SK-N-SH (cell line): ENCODE measurements at regions of chr5 and their contacts with region 1.

Region 1: GRCh38 chr5:86880785-86881492 is 263.2 kb downstream of the COX7C start:
- DNase-seq: peak; percentile 30
- H3K4me3 ChIP-seq: peak overlapping the region in 1 of 2 experiments; percentile 47; a peak in 1 of 4 replicates
- H3K27ac ChIP-seq: no peak overlapping the region
- H3K4me1 ChIP-seq: no peaks in the 10 kb centered on the region
- H3K27me3 ChIP-seq: peaks cover 14% of the 10 kb centered on the region
- CTCF ChIP-seq: peak; percentile 77
- EP300 ChIP-seq: no peak
- RAD21 ChIP-seq: peak; percentile 77

Region 2: GRCh38 chr5:86909456-86910295 is 28.7 kb after region 1 on chr5:
- CTCF ChIA-PET with region 1: no interaction called
- POLR2A ChIA-PET with region 1: no interaction called
- DNase-seq: no peak
- H3K4me3 ChIP-seq: no peak overlapping the region
- H3K27ac ChIP-seq: no peak overlapping the region
- H3K4me1 ChIP-seq: no peaks in the 10 kb centered on the region
- H3K27me3 ChIP-seq: no peaks in the 10 kb centered on the region
- CTCF ChIP-seq: no peak
- EP300 ChIP-seq: no peak
- RAD21 ChIP-seq: no peak

Region 3: GRCh38 chr5:87008751-87009560 is 128.0 kb after region 1 on chr5:
- CTCF ChIA-PET with region 1: interaction called, 15 read pairs
- POLR2A ChIA-PET with region 1: no interaction called
- DNase-seq: no peak
- H3K4me3 ChIP-seq: no peak overlapping the region
- H3K27ac ChIP-seq: no peak overlapping the region
- H3K4me1 ChIP-seq: no peaks in the 10 kb centered on the region
- H3K27me3 ChIP-seq: no peaks in the 10 kb centered on the region; the same call in 1 of the 2 replicates
- CTCF ChIP-seq: no peak
- EP300 ChIP-seq: no peak
- RAD21 ChIP-seq: no peak

Region 4: GRCh38 chr5:87127956-87128687 is 247.2 kb after region 1 on chr5:
- CTCF ChIA-PET with region 1: no interaction called
- POLR2A ChIA-PET with region 1: no interaction called
- DNase-seq: no peak
- H3K4me3 ChIP-seq: no peak overlapping the region; a peak in 1 of 4 replicates
- H3K27ac ChIP-seq: peak overlapping the region; percentile 68 to 94; a peak in 3 of 4 replicates
- H3K4me1 ChIP-seq: peaks cover 0 to 46% of the 10 kb centered on the region in 2 experiments; a peak in 3 of 4 replicates
- H3K27me3 ChIP-seq: no peaks in the 10 kb centered on the region
- CTCF ChIP-seq: no peak
- EP300 ChIP-seq: peak in 1 of 2 experiments; percentile 60; a peak in 1 of 4 replicates
- RAD21 ChIP-seq: no peak